Right cardiac atrium (tissue), 5 donors: ENCODE measurements at regions of chr19 and their contacts with region 1.

Region 1: GRCh38 chr19:925526-926322 is at the start of gene ARID3A:
- DNase-seq: peak; percentile 77 to 92 (median 92)
- ATAC-seq: peak; percentile 79 to 85
- H3K4me3 ChIP-seq: peak within 1 kb of the TSS; percentile 97
- H3K27ac ChIP-seq: peak within 1 kb of the TSS; percentile 26
- H3K4me1 ChIP-seq: no peaks in the 10 kb centered on the region
- H3K27me3 ChIP-seq: no peaks in the 10 kb centered on the region
- total RNA-seq, gene ARID3A: 4.2 to 6.2 (median 5.6) TPM

Region 2: DNA sequence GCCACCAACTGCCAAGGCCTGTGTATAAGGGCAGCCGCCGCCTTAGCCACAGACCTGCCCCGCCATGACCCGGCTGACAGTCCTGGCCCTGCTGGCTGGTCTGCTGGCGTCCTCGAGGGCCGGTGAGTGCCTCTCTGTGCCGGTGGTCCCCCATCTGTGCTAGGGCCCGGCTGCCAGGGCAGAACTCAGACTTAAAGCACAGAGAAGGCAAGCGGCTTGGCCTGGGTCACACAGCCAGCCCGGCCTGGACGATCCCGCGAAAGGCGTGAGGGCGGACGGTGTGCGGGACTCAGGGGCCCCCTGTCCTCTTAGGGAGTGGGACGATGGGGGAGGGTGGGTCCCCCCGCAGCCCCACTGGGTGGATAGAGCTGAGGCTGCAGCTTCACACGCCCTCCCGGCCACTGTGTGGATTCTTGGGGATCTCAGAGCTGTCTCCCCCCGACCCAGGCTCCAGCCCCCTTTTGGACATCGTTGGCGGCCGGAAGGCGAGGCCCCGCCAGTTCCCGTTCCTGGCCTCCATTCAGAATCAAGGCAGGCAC is 97.9 kb before region 1 on chr19 and contains the start of gene AZU1:
- intact Hi-C with region 1: no loop called
- DNase-seq: peak in 1 of 3 donors; percentile 75
- ATAC-seq: peak; percentile 34 to 44
- H3K4me3 ChIP-seq: no peak within 1 kb of the TSS
- H3K27ac ChIP-seq: no peak within 1 kb of the TSS
- H3K4me1 ChIP-seq: no peaks in the 10 kb centered on the region
- H3K27me3 ChIP-seq: no peaks in the 10 kb centered on the region
- total RNA-seq, gene AZU1: not detected

Region 3: DNA sequence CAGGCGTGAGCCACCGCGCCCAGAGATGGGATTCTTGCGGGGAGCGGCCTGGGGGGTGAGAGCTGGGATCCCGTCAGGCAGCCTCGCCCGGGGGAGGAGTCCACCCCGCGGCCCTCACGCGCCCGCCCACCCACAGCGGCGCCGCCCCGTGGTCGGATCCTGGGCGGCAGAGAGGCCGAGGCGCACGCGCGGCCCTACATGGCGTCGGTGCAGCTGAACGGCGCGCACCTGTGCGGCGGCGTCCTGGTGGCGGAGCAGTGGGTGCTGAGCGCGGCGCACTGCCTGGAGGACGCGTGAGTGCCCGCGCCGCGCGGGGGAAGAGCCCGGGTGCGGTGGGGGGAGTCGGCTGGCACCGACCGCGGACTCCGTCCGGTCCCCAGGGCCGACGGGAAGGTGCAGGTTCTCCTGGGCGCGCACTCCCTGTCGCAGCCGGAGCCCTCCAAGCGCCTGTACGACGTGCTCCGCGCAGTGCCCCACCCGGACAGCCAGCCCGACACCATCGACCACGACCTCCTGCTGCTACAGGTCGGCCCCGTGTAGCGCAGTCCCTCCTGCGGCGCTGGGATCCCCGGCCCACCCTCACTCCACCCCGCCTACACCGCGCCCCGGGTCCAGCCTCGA is 65.1 kb before region 1 on chr19:
- intact Hi-C with region 1: loop called in 1 of 4 experiments (anchors 5 kb)
- DNase-seq: peak; percentile 84 to 93 (median 91)
- ATAC-seq: peak; percentile 63 to 64
- H3K4me3 ChIP-seq: peak overlapping the region; percentile 54
- H3K27ac ChIP-seq: no peak overlapping the region
- H3K4me1 ChIP-seq: no peaks in the 10 kb centered on the region
- H3K27me3 ChIP-seq: no peaks in the 10 kb centered on the region

Region 4: GRCh38 chr19:984165-984967 is 58.6 kb after region 1 on chr19 and contains the start of gene WDR18:
- intact Hi-C with region 1: loop called (anchors 1 to 2 kb)
- DNase-seq: peak; percentile 95 to 98 (median 98)
- ATAC-seq: peak; percentile 95 to 96
- H3K4me3 ChIP-seq: peak within 1 kb of the TSS; percentile 92
- H3K27ac ChIP-seq: peak within 1 kb of the TSS; percentile 84
- H3K4me1 ChIP-seq: no peaks in the 10 kb centered on the region
- H3K27me3 ChIP-seq: no peaks in the 10 kb centered on the region
- total RNA-seq, gene WDR18: 12.2 to 24.0 (median 15.8) TPM

Region 5: GRCh38 chr19:1016647-1017114 is 91.0 kb after region 1 on chr19:
- intact Hi-C with region 1: no loop called
- DNase-seq: no peak
- ATAC-seq: peak in 1 of 2 donors; percentile 9
- H3K4me3 ChIP-seq: no peak overlapping the region
- H3K27ac ChIP-seq: no peak overlapping the region
- H3K4me1 ChIP-seq: peaks cover 26% of the 10 kb centered on the region
- H3K27me3 ChIP-seq: no peaks in the 10 kb centered on the region

Region 6: GRCh38 chr19:1035998-1036621 is 110.4 kb after region 1 on chr19:
- intact Hi-C with region 1: no loop called
- DNase-seq: peak in 2 of 3 donors; percentile 35 to 60
- ATAC-seq: no peak
- H3K4me3 ChIP-seq: no peak overlapping the region
- H3K27ac ChIP-seq: no peak overlapping the region
- H3K4me1 ChIP-seq: no peaks in the 10 kb centered on the region
- H3K27me3 ChIP-seq: no peaks in the 10 kb centered on the region